ENCODE measurements at regions of chr5 and their contacts with region 1.

Region 1: GRCh38 chr5:140690941-140691924 is at the starts of genes HARS1 and HARS2:
- DNase-seq: peak; percentile 78
- ATAC-seq: peak; percentile 93
- H3K4me3 Mint-ChIP-seq: peak within 1 kb of the TSS; percentile 97
- H3K27ac Mint-ChIP-seq: peak within 1 kb of the TSS; percentile 96
- H3K4me1 Mint-ChIP-seq: peaks cover 35% of the 10 kb centered on the region
- H3K27me3 Mint-ChIP-seq: no peaks in the 10 kb centered on the region
- total RNA-seq, gene HARS1: 77.3 to 81.5 TPM
- total RNA-seq, gene HARS2: 38.7 to 41.7 TPM

Region 2: GRCh38 chr5:140664359-140665119 is 26.7 kb before region 1 on chr5 and contains the start of gene WDR55:
- POLR2A ChIA-PET with region 1: interaction called, 18 read pairs
- DNase-seq: peak; percentile 96
- ATAC-seq: peak; percentile 94
- H3K4me3 Mint-ChIP-seq: peak within 1 kb of the TSS; percentile 99
- H3K27ac Mint-ChIP-seq: peak within 1 kb of the TSS; percentile 95
- H3K4me1 Mint-ChIP-seq: peaks cover 16% of the 10 kb centered on the region
- H3K27me3 Mint-ChIP-seq: no peaks in the 10 kb centered on the region
- total RNA-seq, gene WDR55: 41.8 to 45.4 TPM

Region 3: GRCh38 chr5:140764177-140765020 is 73.2 kb after region 1 on chr5:
- POLR2A ChIA-PET with region 1: no interaction called
- DNase-seq: no peak
- ATAC-seq: no peak
- H3K4me3 Mint-ChIP-seq: no peak overlapping the region
- H3K27ac Mint-ChIP-seq: no peak overlapping the region
- H3K4me1 Mint-ChIP-seq: no peaks in the 10 kb centered on the region
- H3K27me3 Mint-ChIP-seq: no peaks in the 10 kb centered on the region

Measured in activated naive CD8-positive, alpha-beta T cell treated with anti-CD3 and anti-CD28 coated beads, Interleukin-2, amount 10 ng/mL, durations not matched to agents 7 days and 5 days (primary cell).